ENCODE measurements at regions of chr7 and their contacts with region 1.

Region 1: GRCh38 chr7:128398016-128398840 is 11.6 kb downstream of the IMPDH1 start:
- DNase-seq: peak; percentile 80
- H3K4me3 ChIP-seq: no peak overlapping the region
- H3K27ac ChIP-seq: no peak overlapping the region
- H3K4me1 ChIP-seq: no peaks in the 10 kb centered on the region
- H3K27me3 ChIP-seq: no peaks in the 10 kb centered on the region
- CTCF ChIP-seq: peak; percentile 83 to 98 (median 91)
- EP300 ChIP-seq: no peak
- POLR2A ChIP-seq: no peak

Region 2: DNA sequence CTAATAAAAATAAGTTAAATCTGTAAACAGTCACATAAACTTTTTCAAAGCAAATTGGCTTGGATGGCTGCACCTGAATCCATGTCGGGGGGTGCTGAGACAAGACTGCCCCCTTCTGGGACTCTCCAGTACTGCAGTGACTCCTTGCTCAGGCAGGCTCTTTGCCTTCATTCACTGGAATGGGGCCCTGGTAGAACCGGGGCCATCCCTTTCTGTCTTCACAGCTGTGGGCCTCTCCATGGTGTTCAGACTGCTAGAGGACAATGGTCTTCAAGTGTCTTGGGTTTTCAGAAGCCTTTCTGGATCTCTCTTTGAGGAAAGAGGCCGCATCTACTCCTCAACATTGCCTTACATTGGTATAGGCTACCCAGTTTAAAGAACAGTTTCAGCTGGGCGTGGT is 27.6 kb after region 1 on chr7:
- intact Hi-C with region 1: loop called (anchors 1 kb)
- DNase-seq: peak; percentile 82
- H3K4me3 ChIP-seq: no peak overlapping the region
- H3K27ac ChIP-seq: peak overlapping the region in 1 of 4 donors; percentile 60
- H3K4me1 ChIP-seq: peaks cover 0 to 25% (median 9%) of the 10 kb centered on the region in 4 donors
- H3K27me3 ChIP-seq: no peaks in the 10 kb centered on the region
- CTCF ChIP-seq: peak; percentile 70 to 91 (median 81)
- EP300 ChIP-seq: no peak
- POLR2A ChIP-seq: no peak

Region 3: DNA sequence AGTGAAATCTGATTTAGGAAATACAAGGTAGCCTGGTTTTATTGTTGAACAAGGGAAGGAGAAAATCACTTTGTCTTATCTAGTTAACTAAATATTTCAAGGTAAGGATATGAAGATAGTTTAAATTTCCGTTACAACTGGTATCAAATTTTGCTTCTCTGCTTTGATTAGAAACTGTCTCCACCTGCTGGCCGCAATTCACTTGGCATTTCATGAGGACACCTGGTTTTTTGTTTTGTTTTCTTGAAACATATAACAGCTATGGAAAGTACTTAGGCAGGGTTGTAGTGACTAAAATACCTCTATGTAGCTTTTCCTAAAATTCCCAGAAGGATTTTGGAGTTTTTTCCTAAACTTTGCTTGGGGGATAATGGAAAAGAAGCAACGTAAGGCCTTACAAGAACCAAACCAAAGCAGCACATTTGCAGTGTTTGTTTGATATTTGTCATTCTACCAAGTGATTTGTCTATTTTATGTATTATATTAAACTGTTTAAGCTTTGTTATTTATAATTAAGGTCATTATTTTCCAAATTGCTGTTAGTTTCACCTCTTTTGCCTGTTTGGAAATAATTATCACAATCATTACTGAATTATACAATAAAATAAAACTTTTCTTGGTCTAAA is 900.2 kb after region 1 on chr7:
- intact Hi-C with region 1: no loop called
- DNase-seq: no peak
- H3K4me3 ChIP-seq: no peak overlapping the region
- H3K27ac ChIP-seq: no peak overlapping the region
- H3K4me1 ChIP-seq: peaks cover 0 to 6% (median 0%) of the 10 kb centered on the region in 4 donors
- H3K27me3 ChIP-seq: no peaks in the 10 kb centered on the region
- CTCF ChIP-seq: peak; percentile 9 to 56 (median 48)
- EP300 ChIP-seq: no peak
- POLR2A ChIP-seq: no peak